CD8-positive, alpha-beta T cell (primary cell): ENCODE measurements at regions of chrX and their contacts with region 1.

Region 1: GRCh38 chrX:101550362-101550750 is at the start of gene ARMCX1:
- DNase-seq: peak in 5 of 9 experiments; percentile 13 to 49 (median 30)
- ATAC-seq: peak; percentile 69
- H3K4me3 ChIP-seq: peak within 1 kb of the TSS; percentile 34 to 61
- H3K4me3 Mint-ChIP-seq: peak within 1 kb of the TSS; percentile 84
- H3K27ac ChIP-seq: peak within 1 kb of the TSS in 1 of 2 experiments; percentile 40
- H3K27ac Mint-ChIP-seq: peak within 1 kb of the TSS; percentile 60
- H3K4me1 ChIP-seq: no peaks in the 10 kb centered on the region
- H3K4me1 Mint-ChIP-seq: peaks cover 8% of the 10 kb centered on the region
- H3K27me3 ChIP-seq: no peaks in the 10 kb centered on the region
- H3K27me3 Mint-ChIP-seq: peaks cover 3% of the 10 kb centered on the region
- CTCF ChIP-seq: no peak
- total RNA-seq, gene ARMCX1: 1.4 to 2.2 TPM

Region 2: DNA sequence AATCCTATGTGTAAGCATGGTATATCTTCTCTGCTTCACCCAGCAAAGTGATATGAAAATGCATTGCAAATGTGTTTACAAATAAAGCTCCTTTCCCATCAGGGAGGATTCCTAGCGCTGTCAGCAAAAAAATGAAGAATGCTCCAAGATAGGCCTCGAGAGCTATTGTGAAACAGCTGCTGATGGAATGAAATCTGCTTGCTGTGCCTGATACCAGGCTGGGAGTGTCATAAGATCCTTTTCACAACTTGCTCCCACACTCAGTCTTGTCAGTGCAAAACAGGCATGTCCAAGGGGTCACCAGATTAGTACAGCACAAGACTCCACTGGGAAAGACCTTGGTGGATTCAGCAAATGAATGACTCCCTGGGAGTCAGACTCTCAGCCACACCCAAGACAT is 108.3 kb before region 1 on chrX:
- CTCF ChIA-PET with region 1: no interaction called
- POLR2A ChIA-PET with region 1: no interaction called
- intact Hi-C with region 1: loop called in 1 of 2 experiments (anchors 10 kb)
- DNase-seq: no peak
- ATAC-seq: no peak
- H3K4me3 ChIP-seq: no peak overlapping the region
- H3K4me3 Mint-ChIP-seq: no peak overlapping the region
- H3K27ac ChIP-seq: no peak overlapping the region
- H3K27ac Mint-ChIP-seq: no peak overlapping the region
- H3K4me1 ChIP-seq: no peaks in the 10 kb centered on the region
- H3K4me1 Mint-ChIP-seq: peaks cover 5% of the 10 kb centered on the region
- H3K27me3 ChIP-seq: no peaks in the 10 kb centered on the region
- H3K27me3 Mint-ChIP-seq: no peaks in the 10 kb centered on the region
- CTCF ChIP-seq: no peak